AG04450 (cell line): ENCODE measurements at regions of chr6 and their contacts with region 1.

Region 1: DNA sequence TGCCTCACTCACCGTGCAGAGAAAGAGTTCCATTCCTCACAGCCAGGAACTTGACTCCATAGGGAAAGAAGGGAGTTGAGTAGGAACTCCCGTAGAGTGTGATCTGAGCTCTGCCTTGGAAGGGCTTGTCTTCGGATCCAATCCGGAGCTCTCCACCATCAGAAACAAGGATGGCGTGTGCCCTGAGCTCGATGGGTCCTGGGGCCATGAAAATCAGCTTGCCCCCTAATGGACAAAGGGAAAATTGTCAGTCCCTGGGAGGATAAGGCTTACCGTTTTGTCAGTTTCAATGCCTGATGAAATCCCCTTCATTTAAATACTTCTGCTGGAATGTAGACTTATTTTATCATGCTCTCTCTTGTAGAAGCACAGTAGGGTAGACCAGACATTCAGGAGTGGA is 153.3 kb downstream of the PKHD1 start:
- DNase-seq: no peak
- H3K4me3 ChIP-seq: no peak overlapping the region
- H3K27ac ChIP-seq: no peak overlapping the region
- H3K27me3 ChIP-seq: no peaks in the 10 kb centered on the region
- CTCF ChIP-seq: peak; percentile 9; the same call in 1 of the 2 replicates

Region 2: GRCh38 chr6:51908243-51908642 is 25.9 kb before region 1 on chr6:
- CTCF ChIA-PET with region 1: no interaction called
- POLR2A ChIA-PET with region 1: no interaction called
- DNase-seq: no peak
- H3K4me3 ChIP-seq: no peak overlapping the region
- H3K27ac ChIP-seq: no peak overlapping the region
- H3K27me3 ChIP-seq: no peaks in the 10 kb centered on the region
- CTCF ChIP-seq: no peak

Region 3: DNA sequence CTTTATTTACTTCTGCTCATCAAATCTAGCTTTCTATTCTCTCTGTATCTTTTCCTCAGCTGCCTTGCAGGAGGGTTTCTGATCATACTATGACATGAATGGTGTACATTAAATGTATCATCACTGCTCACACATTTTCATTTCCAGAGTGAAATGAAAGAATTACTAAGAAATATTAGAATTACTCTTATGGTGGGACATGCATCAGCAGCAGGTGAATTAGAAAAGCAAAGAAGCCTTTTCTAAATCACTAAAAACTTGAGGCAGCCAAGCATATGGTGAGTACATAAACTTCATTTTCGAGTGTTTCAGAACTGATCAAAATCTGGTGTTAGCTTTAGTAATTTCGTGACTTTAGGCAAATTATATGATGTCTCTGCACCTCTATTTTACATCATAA is 275.7 kb after region 1 on chr6:
- CTCF ChIA-PET with region 1: no interaction called
- POLR2A ChIA-PET with region 1: interaction called, 13 read pairs
- DNase-seq: no peak
- H3K4me3 ChIP-seq: no peak overlapping the region
- H3K27ac ChIP-seq: no peak overlapping the region
- H3K27me3 ChIP-seq: no peaks in the 10 kb centered on the region
- CTCF ChIP-seq: no peak